Activated CD8-positive, alpha-beta T cell treated with anti-CD3 and anti-CD28 coated beads, Interleukin-2, amount 10 ng/mL, durations not matched to agents 7 days and 5 days (primary cell): ENCODE measurements at regions of chr6 and their contacts with region 1.

Region 1: GRCh38 chr6:31087494-31088089 is 24.8 kb downstream of the C6orf15 start:
- DNase-seq: peak; percentile 91
- ATAC-seq: peak; percentile 90
- H3K4me3 Mint-ChIP-seq: no peak overlapping the region
- H3K27ac Mint-ChIP-seq: no peak overlapping the region
- H3K4me1 Mint-ChIP-seq: peaks cover 9% of the 10 kb centered on the region
- H3K27me3 Mint-ChIP-seq: peaks cover 14% of the 10 kb centered on the region

Region 2: GRCh38 chr6:30844091-30844535 is 243.5 kb before region 1 on chr6:
- CTCF ChIA-PET with region 1: interaction called, 14 read pairs
- POLR2A ChIA-PET with region 1: no interaction called
- DNase-seq: no peak
- ATAC-seq: no peak
- H3K4me3 Mint-ChIP-seq: no peak overlapping the region
- H3K27ac Mint-ChIP-seq: peak overlapping the region; percentile 62
- H3K4me1 Mint-ChIP-seq: peaks cover 51% of the 10 kb centered on the region
- H3K27me3 Mint-ChIP-seq: no peaks in the 10 kb centered on the region

Region 3: DNA sequence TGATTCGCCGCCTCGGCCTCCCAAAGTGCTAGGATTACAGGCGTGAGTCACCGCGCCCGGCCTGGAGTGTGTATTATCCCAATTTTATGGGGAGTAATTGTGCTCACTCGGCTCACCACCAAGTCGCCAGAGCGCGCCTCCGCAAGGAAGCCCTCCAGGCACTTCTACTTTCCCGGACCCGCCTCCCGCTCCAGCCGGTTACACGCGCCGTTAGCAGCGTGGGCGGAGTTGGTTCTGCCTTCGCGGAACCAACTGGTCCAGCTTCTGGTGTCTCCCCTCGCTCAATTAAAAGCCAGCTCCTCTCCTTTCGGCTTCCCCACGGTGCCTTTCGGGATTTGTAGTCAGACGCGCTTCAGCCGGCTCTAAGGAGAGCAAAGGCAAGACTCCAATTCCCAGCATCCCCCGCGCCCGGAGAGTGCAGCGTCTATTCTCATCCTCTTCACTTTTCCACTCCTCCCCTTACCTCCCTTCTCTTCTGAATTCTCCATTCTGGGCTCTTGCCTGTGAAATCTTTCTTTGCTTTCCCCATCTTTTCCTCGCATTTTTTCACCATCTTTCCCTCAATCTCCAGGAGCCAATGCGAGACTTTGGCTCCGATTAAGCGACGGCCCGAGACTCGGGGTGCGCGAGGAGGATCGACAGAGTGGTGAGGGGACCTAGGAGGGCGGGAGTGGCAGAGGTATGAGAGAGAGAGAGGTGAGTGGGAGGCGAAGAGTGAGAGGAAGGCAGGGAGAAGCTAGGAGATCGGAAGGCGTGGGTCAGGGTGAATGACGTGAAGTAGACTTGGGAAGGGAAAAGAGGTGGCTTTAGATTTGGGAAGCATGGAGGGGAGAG is 179.6 kb before region 1 on chr6 and contains the start of gene GTF2H4:
- CTCF ChIA-PET with region 1: interaction called, 97 read pairs
- POLR2A ChIA-PET with region 1: interaction called, 3 read pairs
- DNase-seq: peak; percentile 96
- ATAC-seq: peak; percentile 98
- H3K4me3 Mint-ChIP-seq: peak within 1 kb of the TSS; percentile 99
- H3K27ac Mint-ChIP-seq: peak within 1 kb of the TSS; percentile 66
- H3K4me1 Mint-ChIP-seq: peaks cover 22% of the 10 kb centered on the region
- H3K27me3 Mint-ChIP-seq: no peaks in the 10 kb centered on the region
- total RNA-seq, gene GTF2H4: 30.0 to 30.1 TPM

Region 4: GRCh38 chr6:31058128-31058894 is 29.3 kb before region 1 on chr6:
- CTCF ChIA-PET with region 1: interaction called, 10 read pairs
- POLR2A ChIA-PET with region 1: no interaction called
- DNase-seq: no peak
- ATAC-seq: no peak
- H3K4me3 Mint-ChIP-seq: no peak overlapping the region
- H3K27ac Mint-ChIP-seq: no peak overlapping the region
- H3K4me1 Mint-ChIP-seq: no peaks in the 10 kb centered on the region
- H3K27me3 Mint-ChIP-seq: peaks cover 30% of the 10 kb centered on the region

Region 5: DNA sequence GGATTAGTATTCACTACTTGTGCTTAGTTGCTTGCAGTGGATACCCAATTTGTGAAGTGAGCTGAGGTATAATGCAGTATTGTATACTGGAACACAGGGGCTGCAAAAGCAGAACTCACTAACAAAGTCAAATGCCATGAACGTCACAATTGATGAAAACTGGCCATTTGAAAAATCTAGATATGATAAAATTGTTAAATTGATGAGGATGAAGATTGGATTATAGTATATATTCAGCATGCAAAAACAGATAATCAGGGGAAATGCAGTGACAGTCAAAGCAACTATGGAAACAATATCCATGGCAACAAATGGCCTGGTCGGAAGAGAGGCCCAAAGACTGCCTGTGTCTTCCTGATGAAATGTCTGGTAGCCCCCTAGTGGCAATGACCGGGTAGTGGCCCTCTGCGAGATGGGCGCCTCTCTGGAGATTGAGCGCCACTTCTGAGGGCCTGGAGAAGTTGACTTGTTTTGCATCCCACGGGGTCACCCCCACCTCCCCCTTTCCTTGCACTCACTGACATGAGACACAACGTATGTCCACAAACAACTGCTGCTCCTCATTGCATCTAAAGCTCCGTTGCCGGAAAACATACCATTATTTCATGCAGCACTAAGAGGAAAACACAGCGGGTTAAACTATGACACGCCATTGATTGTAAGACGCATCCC is 18.8 kb before region 1 on chr6:
- CTCF ChIA-PET with region 1: interaction called, 18 read pairs
- POLR2A ChIA-PET with region 1: no interaction called
- DNase-seq: peak; percentile 68
- ATAC-seq: peak; percentile 94
- H3K4me3 Mint-ChIP-seq: no peak overlapping the region
- H3K27ac Mint-ChIP-seq: no peak overlapping the region
- H3K4me1 Mint-ChIP-seq: no peaks in the 10 kb centered on the region
- H3K27me3 Mint-ChIP-seq: peaks cover 9% of the 10 kb centered on the region

Region 6: DNA sequence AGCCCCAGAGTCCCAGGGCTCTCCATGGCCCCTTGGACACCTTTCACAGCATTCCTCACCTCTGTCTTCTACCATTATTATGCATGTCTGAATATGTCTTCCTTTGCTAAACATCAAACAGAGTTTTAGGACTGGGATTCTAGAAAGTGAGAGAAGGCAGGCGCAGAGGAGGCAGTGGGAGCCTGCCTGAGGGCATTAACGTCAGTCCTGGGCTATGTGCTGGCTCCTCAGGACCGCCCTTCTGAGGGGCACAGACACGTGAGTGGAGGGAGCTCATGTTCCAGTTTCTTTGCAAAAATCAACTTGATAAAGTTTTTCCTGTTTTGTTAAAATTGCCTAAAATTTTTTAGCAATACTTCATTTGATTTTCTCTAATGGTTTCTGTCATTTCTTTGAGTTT is 13.2 kb before region 1 on chr6:
- CTCF ChIA-PET with region 1: interaction called, 27 read pairs
- POLR2A ChIA-PET with region 1: no interaction called
- DNase-seq: no peak
- ATAC-seq: no peak
- H3K4me3 Mint-ChIP-seq: no peak overlapping the region
- H3K27ac Mint-ChIP-seq: no peak overlapping the region
- H3K4me1 Mint-ChIP-seq: peaks cover 3% of the 10 kb centered on the region
- H3K27me3 Mint-ChIP-seq: peaks cover 5% of the 10 kb centered on the region

Region 7: DNA sequence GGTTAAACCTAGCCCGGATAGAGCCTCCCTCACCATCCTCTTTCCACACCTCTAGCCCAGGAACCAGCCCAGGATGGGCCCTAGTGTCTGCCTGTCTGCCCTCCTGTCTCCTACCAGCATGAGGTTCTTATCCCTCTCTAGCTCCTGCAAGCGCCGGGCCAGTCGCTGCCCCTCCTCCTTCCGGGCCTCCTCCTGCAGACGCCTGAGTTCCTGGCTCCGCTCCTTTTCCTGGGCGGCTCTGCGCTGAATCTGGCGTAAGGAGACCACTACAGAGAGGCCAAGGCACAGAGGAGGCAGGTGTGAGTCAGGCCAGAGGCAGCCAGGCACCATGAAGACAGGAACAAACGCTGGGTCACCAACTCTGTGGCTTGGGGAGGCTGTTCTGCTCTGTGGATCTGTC is 55.6 kb after region 1 on chr6:
- CTCF ChIA-PET with region 1: no interaction called
- POLR2A ChIA-PET with region 1: no interaction called
- DNase-seq: no peak
- ATAC-seq: no peak
- H3K4me3 Mint-ChIP-seq: no peak overlapping the region
- H3K27ac Mint-ChIP-seq: no peak overlapping the region
- H3K4me1 Mint-ChIP-seq: no peaks in the 10 kb centered on the region
- H3K27me3 Mint-ChIP-seq: no peaks in the 10 kb centered on the region

Region 8: GRCh38 chr6:31379850-31380249 is 292.3 kb after region 1 on chr6:
- CTCF ChIA-PET with region 1: no interaction called
- POLR2A ChIA-PET with region 1: no interaction called
- DNase-seq: no peak
- ATAC-seq: no peak
- H3K4me3 Mint-ChIP-seq: no peak overlapping the region
- H3K27ac Mint-ChIP-seq: no peak overlapping the region
- H3K4me1 Mint-ChIP-seq: no peaks in the 10 kb centered on the region
- H3K27me3 Mint-ChIP-seq: peaks cover 24% of the 10 kb centered on the region

Region 9: DNA sequence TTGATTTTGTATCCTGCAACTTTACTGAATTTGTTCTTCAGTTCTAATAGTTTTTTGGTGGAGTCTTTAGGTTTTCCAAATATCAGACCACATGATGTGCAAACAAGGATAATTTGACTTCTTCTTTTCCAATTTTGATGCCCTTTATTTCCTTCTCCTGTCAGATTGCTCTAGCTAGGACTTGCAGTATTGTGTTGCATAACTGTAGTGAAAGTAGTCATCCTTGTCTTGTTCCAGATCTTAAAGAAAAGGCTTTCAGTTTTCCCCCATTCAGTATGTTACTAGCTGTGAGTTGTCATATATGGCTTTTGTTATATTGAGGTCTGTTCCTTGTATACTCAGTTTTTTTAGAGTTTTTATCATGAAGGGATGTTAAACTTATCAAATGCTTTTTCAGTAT is 415.0 kb after region 1 on chr6:
- CTCF ChIA-PET with region 1: no interaction called
- POLR2A ChIA-PET with region 1: no interaction called
- DNase-seq: no peak
- ATAC-seq: no peak
- H3K4me3 Mint-ChIP-seq: no peak overlapping the region
- H3K27ac Mint-ChIP-seq: no peak overlapping the region
- H3K4me1 Mint-ChIP-seq: peaks cover 51% of the 10 kb centered on the region
- H3K27me3 Mint-ChIP-seq: no peaks in the 10 kb centered on the region

Region 10: DNA sequence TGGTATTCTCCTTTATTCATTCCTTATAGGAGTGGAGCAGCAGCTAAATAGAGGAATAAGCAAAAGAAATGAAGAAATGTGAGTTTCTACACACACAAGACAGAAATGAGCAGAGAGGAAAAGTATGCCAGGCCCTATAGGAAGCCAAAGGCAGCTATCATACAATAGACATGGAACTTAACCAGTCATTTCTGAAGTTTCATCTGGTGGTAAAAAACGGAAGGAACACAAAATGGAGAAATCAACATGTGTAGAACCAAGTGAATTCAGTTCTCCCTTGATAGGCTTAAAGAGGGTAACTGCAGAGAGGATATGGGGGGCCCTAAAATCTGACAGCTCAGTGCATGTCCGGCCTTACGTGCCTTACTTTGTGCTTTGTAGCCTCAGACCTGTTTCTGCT is 1239.5 kb after region 1 on chr6:
- CTCF ChIA-PET with region 1: no interaction called
- POLR2A ChIA-PET with region 1: no interaction called
- DNase-seq: no peak
- ATAC-seq: no peak
- H3K4me3 Mint-ChIP-seq: no peak overlapping the region
- H3K27ac Mint-ChIP-seq: no peak overlapping the region
- H3K4me1 Mint-ChIP-seq: peaks cover 9% of the 10 kb centered on the region
- H3K27me3 Mint-ChIP-seq: peaks cover 23% of the 10 kb centered on the region